AG04449 (cell line): ENCODE measurements at regions of chr1 and their contacts with region 1.

Region 1: DNA sequence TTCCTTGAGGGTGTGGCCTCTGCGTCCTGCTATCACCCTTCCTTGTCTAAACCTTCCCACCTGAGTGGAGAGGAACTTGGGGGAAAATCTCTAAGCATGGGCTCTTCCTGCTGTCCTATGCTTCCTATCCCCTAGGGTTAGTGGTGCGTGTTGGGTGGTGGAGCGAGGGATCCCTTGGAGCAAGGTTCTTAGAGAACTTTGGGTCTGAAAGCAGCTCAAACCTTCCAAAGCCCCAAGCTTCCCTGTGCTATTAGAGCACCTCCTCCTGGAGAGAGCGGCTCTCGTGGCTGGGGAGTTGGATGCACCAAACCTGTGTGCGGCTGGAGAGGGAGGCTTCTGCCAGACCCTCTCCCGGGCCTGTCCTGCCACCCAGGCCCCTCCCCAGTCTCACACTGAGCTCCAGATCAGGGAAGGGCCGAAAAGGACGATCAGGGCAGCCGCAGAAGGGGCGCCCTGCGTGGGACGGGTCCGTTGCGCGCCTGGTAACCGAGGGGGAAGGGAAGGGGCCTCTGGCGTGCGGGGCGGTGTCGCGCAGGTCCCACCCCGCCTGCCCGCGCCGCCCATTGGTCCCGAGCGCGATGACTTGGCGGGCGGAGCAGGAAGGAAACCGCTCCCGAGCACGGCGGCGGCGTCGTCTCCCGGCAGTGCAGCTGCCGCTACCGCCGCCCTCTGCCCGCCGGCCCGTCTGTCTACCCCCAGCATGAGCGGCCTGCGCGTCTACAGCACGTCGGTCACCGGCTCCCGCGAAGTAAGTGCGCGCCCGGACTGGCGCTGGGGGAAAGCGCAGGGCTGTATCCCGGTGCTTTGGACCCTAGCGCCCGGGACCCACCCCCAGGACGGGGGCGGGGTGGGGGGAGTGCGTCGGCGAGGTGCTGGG is at the start of gene SH3BGRL3:
- DNase-seq: no peak
- H3K4me3 ChIP-seq: peak within 1 kb of the TSS; percentile 81
- CTCF ChIP-seq: peak; percentile 75

Region 2: DNA sequence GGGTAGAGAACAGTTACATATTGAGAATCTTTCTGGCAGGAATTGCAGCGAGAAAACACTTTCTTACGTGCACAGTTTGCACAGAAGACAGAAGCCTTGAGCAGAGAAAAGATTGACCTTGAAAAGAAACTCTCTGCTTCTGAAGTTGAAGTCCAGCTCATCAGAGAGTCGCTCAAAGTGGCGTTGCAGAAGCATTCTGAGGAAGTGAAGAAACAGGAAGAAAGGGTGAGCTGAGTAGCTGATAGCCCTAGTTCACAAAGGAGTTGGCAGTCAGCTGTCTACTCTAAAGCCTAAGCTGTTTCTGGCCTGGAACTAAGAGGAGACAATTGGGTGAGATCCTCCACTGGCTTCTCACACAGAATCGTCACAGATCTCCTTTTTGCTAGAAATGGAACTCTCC is 20.1 kb before region 1 on chr1:
- CTCF ChIA-PET with region 1: interaction called, 78 read pairs
- POLR2A ChIA-PET with region 1: no interaction called
- DNase-seq: no peak
- H3K4me3 ChIP-seq: no peak overlapping the region
- CTCF ChIP-seq: no peak

Region 3: DNA sequence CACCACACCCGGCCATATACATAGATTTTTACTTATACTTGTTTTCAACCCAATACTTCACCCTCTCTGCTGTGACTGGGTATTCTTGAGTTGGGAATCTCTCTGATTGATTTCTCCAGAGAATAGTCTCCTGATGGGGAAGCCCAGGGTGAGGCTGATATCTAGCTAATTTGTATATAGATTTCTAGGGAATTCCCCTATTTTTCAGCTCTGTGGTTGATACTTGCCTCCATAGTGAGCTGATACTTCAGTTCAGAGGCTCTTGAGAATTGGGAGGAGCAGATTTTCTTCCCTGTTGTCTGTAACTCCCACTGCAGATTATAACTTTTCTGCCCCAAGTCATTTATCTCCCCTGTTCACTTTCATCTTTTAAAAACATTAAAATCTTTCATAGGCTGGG is 14.3 kb before region 1 on chr1:
- CTCF ChIA-PET with region 1: interaction called, 78 read pairs
- POLR2A ChIA-PET with region 1: interaction called, 3 read pairs
- DNase-seq: no peak
- H3K4me3 ChIP-seq: no peak overlapping the region
- CTCF ChIP-seq: no peak

Region 4: GRCh38 chr1:26314501-26314900 is 34.8 kb after region 1 on chr1:
- CTCF ChIA-PET with region 1: interaction called, 179 read pairs
- POLR2A ChIA-PET with region 1: no interaction called
- DNase-seq: no peak
- H3K4me3 ChIP-seq: no peak overlapping the region
- CTCF ChIP-seq: no peak

Region 5: GRCh38 chr1:26582836-26583460 is 303.3 kb after region 1 on chr1:
- CTCF ChIA-PET with region 1: no interaction called
- POLR2A ChIA-PET with region 1: no interaction called
- DNase-seq: no peak
- H3K4me3 ChIP-seq: no peak overlapping the region
- CTCF ChIP-seq: no peak